GM12878 (cell line): ENCODE measurements at regions of chr3 and their contacts with region 1.

Region 1: GRCh38 chr3:124887177-124887931 is at the start of gene ITGB5:
- DNase-seq: no peak
- ATAC-seq: peak; percentile 81
- H3K4me3 ChIP-seq: peak within 1 kb of the TSS; percentile 84
- H3K27ac ChIP-seq: no peak within 1 kb of the TSS
- H3K4me1 ChIP-seq: no peaks in the 10 kb centered on the region
- H3K27me3 ChIP-seq: peaks cover 0 to 4% of the 10 kb centered on the region in 2 experiments; a peak in 3 of 4 replicates
- CTCF ChIP-seq: no peak
- EP300 ChIP-seq: no peak
- POLR2A ChIP-seq: no peak
- RAD21 ChIP-seq: no peak
- polyA plus RNA-seq, gene ITGB5: 0.05 to 0.26 TPM

Region 2: GRCh38 chr3:124834723-124835718 is 52.3 kb before region 1 on chr3:
- CTCF ChIA-PET with region 1: no interaction called
- POLR2A ChIA-PET with region 1: no interaction called
- RAD21 ChIA-PET with region 1: no interaction called
- SMC1A ChIA-PET with region 1: no interaction called
- in situ Hi-C with region 1: no loop called
- intact Hi-C with region 1: loop called (anchors 2 kb)
- DNase-seq: peak; percentile 90
- ATAC-seq: peak; percentile 96
- H3K4me3 ChIP-seq: peak overlapping the region; percentile 51
- H3K27ac ChIP-seq: peak overlapping the region; percentile 46
- H3K4me1 ChIP-seq: peaks cover 17% of the 10 kb centered on the region
- H3K27me3 ChIP-seq: no peaks in the 10 kb centered on the region
- CTCF ChIP-seq: peak in 1 of 3 experiments; percentile 52; a peak in 2 of 6 replicates
- EP300 ChIP-seq: peak; percentile 78 to 83
- POLR2A ChIP-seq: 0 out of 2 replicates have a peak, but pooled peaks have one; percentile 38
- RAD21 ChIP-seq: peak; percentile 22; the same call in 1 of the 2 replicates

Region 3: GRCh38 chr3:124876401-124876878 is 10.9 kb before region 1 on chr3:
- CTCF ChIA-PET with region 1: no interaction called
- POLR2A ChIA-PET with region 1: interaction called, 10 read pairs
- RAD21 ChIA-PET with region 1: no interaction called
- SMC1A ChIA-PET with region 1: interaction called, 3 read pairs
- in situ Hi-C with region 1: no loop called
- intact Hi-C with region 1: no loop called
- DNase-seq: no peak
- ATAC-seq: no peak
- H3K4me3 ChIP-seq: no peak overlapping the region
- H3K27ac ChIP-seq: no peak overlapping the region
- H3K4me1 ChIP-seq: no peaks in the 10 kb centered on the region
- H3K27me3 ChIP-seq: no peaks in the 10 kb centered on the region
- CTCF ChIP-seq: no peak
- EP300 ChIP-seq: no peak
- POLR2A ChIP-seq: no peak
- RAD21 ChIP-seq: no peak

Region 4: DNA sequence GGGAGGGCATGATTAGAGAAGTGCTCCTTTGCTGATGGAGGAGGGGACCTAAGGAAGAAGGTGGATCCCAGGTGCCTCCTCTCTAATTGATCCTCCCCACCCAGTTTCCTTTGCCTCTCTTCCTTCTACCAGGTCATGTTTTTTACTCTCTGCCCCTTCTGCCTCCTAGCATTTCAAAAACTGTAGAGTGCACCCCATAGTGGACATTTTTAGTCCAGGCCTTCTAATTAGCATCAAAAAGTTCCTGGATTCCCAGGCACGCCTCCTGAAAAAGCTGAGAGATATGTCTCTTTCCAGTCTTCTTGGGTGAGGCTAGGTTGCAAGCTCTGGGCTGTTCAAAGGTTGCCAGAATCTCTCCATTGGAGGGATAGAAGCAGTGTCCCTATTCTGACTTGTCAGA is 18.5 kb after region 1 on chr3:
- CTCF ChIA-PET with region 1: interaction called, 11 read pairs
- POLR2A ChIA-PET with region 1: interaction called, 4 read pairs
- RAD21 ChIA-PET with region 1: interaction called, 9 read pairs
- SMC1A ChIA-PET with region 1: interaction called, 7 read pairs
- in situ Hi-C with region 1: no loop called
- intact Hi-C with region 1: no loop called
- DNase-seq: no peak
- ATAC-seq: no peak
- H3K4me3 ChIP-seq: no peak overlapping the region
- H3K27ac ChIP-seq: no peak overlapping the region
- H3K4me1 ChIP-seq: no peaks in the 10 kb centered on the region
- H3K27me3 ChIP-seq: no peaks in the 10 kb centered on the region; a peak in 2 of 4 replicates
- CTCF ChIP-seq: no peak
- EP300 ChIP-seq: no peak
- POLR2A ChIP-seq: no peak
- RAD21 ChIP-seq: no peak

Region 5: DNA sequence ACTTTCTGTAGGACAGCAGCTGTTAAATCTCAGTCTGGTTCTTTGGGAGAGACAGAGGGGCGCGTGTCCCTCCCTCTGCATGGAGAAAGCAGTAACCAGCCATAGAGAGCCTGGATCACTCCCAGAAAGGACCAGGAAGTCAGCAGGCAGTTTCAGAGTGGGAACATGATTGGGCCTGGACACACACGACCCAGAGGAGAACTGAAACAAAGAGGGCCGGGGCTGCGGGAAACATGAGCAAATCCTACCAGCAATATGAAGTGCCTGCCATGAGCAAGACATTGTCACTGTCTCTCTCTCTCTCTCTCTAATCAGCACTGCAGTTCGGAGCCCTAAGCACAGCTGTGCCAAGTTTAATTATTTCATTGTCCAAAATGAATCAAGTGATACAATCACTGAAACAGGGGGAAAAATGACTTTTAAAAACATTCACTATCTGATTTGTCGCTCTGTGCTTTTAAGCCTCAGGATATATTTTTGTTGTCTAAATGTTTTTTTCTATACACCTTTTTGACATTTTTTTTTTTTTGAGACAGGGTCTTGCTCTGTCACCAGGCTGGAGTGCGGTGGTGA is 29.6 kb after region 1 on chr3:
- CTCF ChIA-PET with region 1: no interaction called
- POLR2A ChIA-PET with region 1: no interaction called
- RAD21 ChIA-PET with region 1: no interaction called
- SMC1A ChIA-PET with region 1: no interaction called
- in situ Hi-C with region 1: no loop called
- intact Hi-C with region 1: no loop called
- DNase-seq: no peak
- ATAC-seq: no peak
- H3K4me3 ChIP-seq: no peak overlapping the region
- H3K27ac ChIP-seq: no peak overlapping the region
- H3K4me1 ChIP-seq: no peaks in the 10 kb centered on the region
- H3K27me3 ChIP-seq: peaks cover 0 to 2% of the 10 kb centered on the region in 2 experiments; a peak in 1 of 4 replicates
- CTCF ChIP-seq: no peak
- EP300 ChIP-seq: no peak
- POLR2A ChIP-seq: no peak
- RAD21 ChIP-seq: no peak